Caki2 (cell line): ENCODE measurements at regions of chr20 and their contacts with region 1.

Region 1: GRCh38 chr20:18287915-18288748 is at the start of gene ZNF133:
- DNase-seq: peak; percentile 97
- total RNA-seq, gene ZNF133: 15.7 and 28.1 TPM in 2 replicates

Region 2: GRCh38 chr20:18252597-18253451 is 35.3 kb before region 1 on chr20:
- in situ Hi-C with region 1: loop called (anchors 5 kb)
- DNase-seq: peak; percentile 98